Ascending aorta (tissue), 2 donors: ENCODE measurements at regions of chr9 and their contacts with region 1.

Region 1: DNA sequence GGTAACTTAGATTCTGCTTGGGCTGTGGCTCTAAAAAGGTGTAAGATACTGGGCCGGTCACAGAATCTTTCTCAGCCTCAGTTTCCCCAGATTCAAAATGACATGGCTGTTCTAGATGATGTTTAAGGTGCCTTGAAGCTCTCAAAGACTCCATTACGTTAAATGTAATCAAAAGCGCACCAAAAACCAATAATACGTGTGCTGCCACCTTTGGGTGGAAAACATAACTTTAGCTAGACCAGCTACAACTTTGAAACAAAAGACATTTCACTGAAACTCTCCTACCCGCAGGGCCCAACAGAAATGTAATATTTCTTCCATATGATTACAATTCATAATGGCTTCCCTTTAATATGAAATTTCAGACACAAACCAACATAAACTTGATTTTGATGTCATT is 35.0 kb upstream of the PCSK5 start:
- DNase-seq: no peak
- H3K4me3 ChIP-seq: no peak overlapping the region
- H3K27ac ChIP-seq: no peak overlapping the region
- H3K4me1 ChIP-seq: no peaks in the 10 kb centered on the region
- H3K27me3 ChIP-seq: no peaks in the 10 kb centered on the region
- CTCF ChIP-seq: peak; percentile 28 to 71 (median 51)

Region 2: DNA sequence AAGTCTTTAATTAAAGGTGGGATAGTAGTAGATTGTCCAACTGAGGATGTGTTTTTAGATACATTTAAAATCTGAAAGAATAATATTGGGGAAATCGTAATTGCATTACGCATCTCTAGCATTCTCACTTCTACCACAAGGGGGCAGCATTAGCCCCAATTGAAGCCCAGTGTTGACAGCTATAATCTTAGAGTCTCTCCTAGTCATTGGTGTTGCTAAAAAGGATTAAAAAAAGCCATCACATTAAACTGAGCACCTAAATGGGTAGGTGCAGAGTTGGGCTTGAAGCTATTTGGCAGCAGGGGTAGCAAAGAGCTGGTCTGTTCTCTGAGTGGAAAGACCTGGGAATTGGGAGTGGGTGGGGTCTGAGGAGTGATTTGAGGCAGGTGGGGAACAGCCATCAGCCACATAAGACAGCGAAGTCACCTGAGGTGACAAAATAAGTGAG is 590.0 kb before region 1 on chr9:
- intact Hi-C with region 1: loop called (anchors 2 kb)
- DNase-seq: peak in 1 of 2 donors; percentile 72
- H3K4me3 ChIP-seq: no peak overlapping the region
- H3K27ac ChIP-seq: no peak overlapping the region
- H3K4me1 ChIP-seq: no peaks in the 10 kb centered on the region
- H3K27me3 ChIP-seq: no peaks in the 10 kb centered on the region
- CTCF ChIP-seq: peak; percentile 60 to 84 (median 77)

Region 3: GRCh38 chr9:75333624-75334023 is 521.9 kb before region 1 on chr9:
- intact Hi-C with region 1: loop called (anchors 5 kb)
- DNase-seq: no peak
- H3K4me3 ChIP-seq: no peak overlapping the region
- H3K27ac ChIP-seq: no peak overlapping the region
- H3K4me1 ChIP-seq: no peaks in the 10 kb centered on the region
- H3K27me3 ChIP-seq: no peaks in the 10 kb centered on the region
- CTCF ChIP-seq: peak in 2 of 3 experiments; percentile 24 to 45

Region 4: DNA sequence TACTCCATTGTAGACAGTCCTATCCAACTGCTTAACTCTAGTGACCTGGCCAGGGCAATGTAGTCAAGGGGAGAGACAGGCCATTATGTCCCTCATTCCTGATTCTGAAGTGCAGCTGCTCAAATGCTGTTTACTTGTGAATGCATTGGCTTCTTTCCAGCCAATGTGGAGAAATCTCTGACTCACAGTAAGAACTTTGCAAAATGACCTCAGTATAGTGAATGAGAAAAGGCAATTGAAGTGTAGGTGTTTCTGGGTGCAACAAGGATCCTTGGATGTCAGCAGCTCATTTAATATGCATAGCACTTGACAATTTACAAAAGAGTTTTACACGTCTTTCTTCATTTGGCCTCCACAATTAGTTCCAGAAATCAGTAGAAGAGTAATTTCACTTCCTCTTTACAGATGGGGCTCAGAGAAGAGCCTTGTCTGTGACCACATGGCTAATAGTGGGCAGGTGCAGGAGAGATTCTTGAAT is 400.0 kb before region 1 on chr9:
- intact Hi-C with region 1: loop called (anchors 10 kb)
- DNase-seq: no peak
- H3K4me3 ChIP-seq: no peak overlapping the region
- H3K27ac ChIP-seq: no peak overlapping the region
- H3K4me1 ChIP-seq: peaks cover 3 to 25% of the 10 kb centered on the region in 2 donors
- H3K27me3 ChIP-seq: no peaks in the 10 kb centered on the region
- CTCF ChIP-seq: no peak

Region 5: DNA sequence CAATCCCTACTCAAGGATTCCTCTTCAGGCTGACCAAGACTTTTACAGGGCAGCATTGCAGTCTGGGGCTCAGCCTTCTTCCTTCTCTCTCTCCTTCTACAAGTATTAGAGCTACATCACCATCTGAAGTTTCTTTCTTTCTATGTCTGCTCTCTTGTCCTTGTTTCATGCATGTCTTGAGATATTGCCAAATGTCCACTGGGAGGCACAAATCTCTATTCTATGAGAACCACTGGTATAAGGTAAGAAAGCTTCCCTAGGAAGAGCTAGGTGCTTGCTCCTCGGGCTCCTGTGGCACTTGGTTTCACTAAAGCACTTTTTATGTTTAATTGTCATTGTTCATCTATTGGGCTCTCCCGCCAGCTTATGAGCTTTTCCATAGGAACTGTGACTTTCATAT is 254.2 kb before region 1 on chr9:
- intact Hi-C with region 1: loop called (anchors 10 kb)
- DNase-seq: no peak
- H3K4me3 ChIP-seq: no peak overlapping the region
- H3K27ac ChIP-seq: no peak overlapping the region
- H3K4me1 ChIP-seq: no peaks in the 10 kb centered on the region
- H3K27me3 ChIP-seq: no peaks in the 10 kb centered on the region
- CTCF ChIP-seq: peak in 1 of 3 experiments; percentile 5

Region 6: GRCh38 chr9:75669701-75670100 is 185.8 kb before region 1 on chr9:
- intact Hi-C with region 1: no loop called
- DNase-seq: no peak
- H3K4me3 ChIP-seq: no peak overlapping the region
- H3K27ac ChIP-seq: no peak overlapping the region
- H3K4me1 ChIP-seq: peaks cover 0 to 2% of the 10 kb centered on the region in 2 donors
- H3K27me3 ChIP-seq: no peaks in the 10 kb centered on the region
- CTCF ChIP-seq: no peak

Region 7: DNA sequence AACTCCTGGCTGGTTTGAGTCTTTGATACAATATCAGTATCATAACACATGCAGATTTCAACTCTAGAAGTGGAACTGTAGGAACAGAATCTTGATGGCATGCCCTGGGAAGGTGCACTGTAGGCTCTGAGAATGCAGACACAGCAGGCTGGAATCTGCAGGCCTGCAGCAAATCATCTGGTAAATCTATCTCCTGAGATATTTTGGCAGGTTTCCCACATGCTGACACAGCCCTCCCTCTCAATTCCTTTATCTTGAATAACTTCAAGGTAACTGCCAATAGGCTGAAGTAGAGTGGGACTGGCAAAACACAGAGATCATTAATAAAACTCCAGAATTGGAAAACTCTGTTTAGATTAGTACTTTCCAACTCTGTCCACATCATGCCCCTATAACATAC is 142.8 kb before region 1 on chr9:
- intact Hi-C with region 1: loop called (anchors 10 kb)
- DNase-seq: no peak
- H3K4me3 ChIP-seq: no peak overlapping the region
- H3K27ac ChIP-seq: no peak overlapping the region
- H3K4me1 ChIP-seq: peaks cover 0 to 2% of the 10 kb centered on the region in 2 donors
- H3K27me3 ChIP-seq: no peaks in the 10 kb centered on the region
- CTCF ChIP-seq: no peak

Region 8: GRCh38 chr9:75739884-75740611 is 115.5 kb before region 1 on chr9:
- intact Hi-C with region 1: no loop called
- DNase-seq: no peak
- H3K4me3 ChIP-seq: no peak overlapping the region
- H3K27ac ChIP-seq: no peak overlapping the region
- H3K4me1 ChIP-seq: no peaks in the 10 kb centered on the region
- H3K27me3 ChIP-seq: no peaks in the 10 kb centered on the region
- CTCF ChIP-seq: no peak

Region 9: GRCh38 chr9:75814667-75815066 is 40.8 kb before region 1 on chr9:
- intact Hi-C with region 1: no loop called
- DNase-seq: no peak
- H3K4me3 ChIP-seq: no peak overlapping the region
- H3K27ac ChIP-seq: no peak overlapping the region
- H3K4me1 ChIP-seq: no peaks in the 10 kb centered on the region
- H3K27me3 ChIP-seq: no peaks in the 10 kb centered on the region
- CTCF ChIP-seq: no peak